H1 (cell line): ENCODE measurements at regions of chr3 and their contacts with region 1.

Region 1: DNA sequence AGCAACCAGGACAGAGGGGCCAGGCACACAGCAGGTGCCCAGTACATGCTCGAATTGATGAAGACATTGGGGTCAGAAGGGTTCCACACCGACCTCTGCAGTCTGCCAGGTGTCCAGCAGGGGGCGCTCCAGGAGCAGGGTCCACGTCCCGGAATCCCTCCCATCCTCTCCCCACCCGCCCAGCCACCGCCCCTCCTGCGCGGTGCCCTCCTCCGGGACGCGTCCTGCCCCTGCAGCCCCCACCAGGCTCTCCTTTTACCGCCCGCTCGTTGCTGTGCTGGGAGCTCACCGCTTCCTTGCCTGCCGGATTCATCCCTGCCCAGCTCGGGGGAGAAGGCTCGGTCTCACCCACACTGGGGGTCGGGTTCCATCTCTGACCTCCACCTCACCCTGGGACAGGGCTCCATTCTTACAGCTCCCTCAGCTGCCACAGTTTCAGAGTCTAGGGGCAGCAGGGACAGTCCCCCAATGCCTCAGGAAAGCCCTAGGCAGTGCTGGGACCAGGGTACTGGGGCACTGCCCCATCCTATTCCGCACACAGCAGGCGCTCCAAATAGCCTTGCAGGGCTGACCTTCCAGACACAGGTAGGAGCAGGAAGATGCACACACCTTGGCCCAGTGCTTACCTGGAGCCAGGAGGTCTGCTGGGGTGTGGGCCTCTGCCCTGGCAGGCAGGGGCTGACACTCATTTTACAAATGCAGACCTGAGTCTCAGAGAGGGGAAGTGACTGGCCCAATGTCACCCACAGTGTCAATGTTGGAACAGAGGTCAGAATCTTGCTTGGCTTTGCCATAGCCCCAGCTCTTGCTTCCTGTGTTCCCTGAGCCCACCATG is 31.0 kb downstream of the GRIP2 start:
- DNase-seq: peak; percentile 78 to 100
- H3K4me3 ChIP-seq: peak overlapping the region in 3 of 4 experiments; percentile 33 to 55 (median 47); a peak in 6 of 8 replicates
- H3K27ac ChIP-seq: no peak overlapping the region
- H3K4me1 ChIP-seq: peaks cover 0 to 8% (median 5%) of the 10 kb centered on the region in 4 experiments; a peak in 4 of 7 replicates
- H3K27me3 ChIP-seq: no peaks in the 10 kb centered on the region
- CTCF ChIP-seq: peak in 2 of 3 experiments; percentile 86 to 91; a peak in 3 of 4 replicates
- EP300 ChIP-seq: no peak
- POLR2A ChIP-seq: no peak
- RAD21 ChIP-seq: peak; percentile 91

Region 2: GRCh38 chr3:14497321-14497720 is 11.9 kb before region 1 on chr3:
- CTCF ChIA-PET with region 1: interaction called, 18 read pairs
- POLR2A ChIA-PET with region 1: interaction called, 3 read pairs
- DNase-seq: no peak
- H3K4me3 ChIP-seq: no peak overlapping the region
- H3K27ac ChIP-seq: no peak overlapping the region
- H3K4me1 ChIP-seq: no peaks in the 10 kb centered on the region
- H3K27me3 ChIP-seq: no peaks in the 10 kb centered on the region
- CTCF ChIP-seq: peak; percentile 29 to 53 (median 43); a peak in 3 of 4 replicates
- EP300 ChIP-seq: no peak
- POLR2A ChIP-seq: no peak
- RAD21 ChIP-seq: peak; percentile 63 to 73

Region 3: DNA sequence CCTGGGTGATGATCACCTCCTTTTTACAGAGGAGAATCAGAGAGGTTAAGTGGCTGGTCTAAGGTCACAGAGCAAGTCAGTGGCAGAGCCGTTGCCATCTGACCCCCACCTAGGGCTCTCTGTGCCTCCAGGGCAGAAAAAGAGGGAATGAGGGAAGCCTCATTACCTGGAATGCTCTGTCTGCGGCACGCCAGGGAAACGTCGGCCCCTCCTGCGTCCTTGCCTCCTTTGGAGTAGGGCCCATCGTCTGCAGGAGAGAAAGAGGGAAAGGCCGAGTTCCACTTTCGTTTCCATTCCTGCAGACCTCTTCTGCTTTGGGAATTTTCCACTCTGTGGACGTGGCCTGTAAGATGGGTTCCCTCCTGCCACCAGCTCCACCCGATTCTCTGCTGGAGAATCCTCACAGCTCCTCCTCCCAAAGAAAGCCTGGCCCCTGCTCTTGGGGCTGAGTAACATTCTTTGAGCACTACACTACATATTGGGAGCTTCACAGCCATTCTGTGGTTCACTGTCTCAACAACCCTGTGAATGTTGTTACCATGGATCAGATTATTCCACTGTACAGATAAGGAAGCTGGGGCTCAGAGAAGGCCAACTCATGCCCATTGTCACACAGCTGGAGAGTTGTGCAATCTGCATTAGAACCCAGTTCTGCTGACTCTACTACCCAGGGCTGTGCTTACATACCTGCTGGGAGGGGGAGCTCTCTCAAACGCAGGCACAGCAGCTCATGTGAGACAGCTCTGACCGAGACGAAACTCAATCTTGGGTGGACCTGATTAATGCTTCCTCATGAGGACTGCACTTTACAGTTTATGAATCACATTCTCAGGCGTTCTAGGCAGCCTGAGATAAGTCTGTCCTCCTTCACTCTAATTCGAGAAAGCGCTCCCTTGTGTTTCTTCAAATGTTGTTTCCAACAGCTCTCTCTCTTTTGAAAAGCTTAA is 16.8 kb after region 1 on chr3:
- CTCF ChIA-PET with region 1: interaction called, 103 read pairs
- POLR2A ChIA-PET with region 1: interaction called, 4 read pairs
- DNase-seq: no peak
- H3K4me3 ChIP-seq: no peak overlapping the region
- H3K27ac ChIP-seq: no peak overlapping the region
- H3K4me1 ChIP-seq: peaks cover 2 to 9% (median 7%) of the 10 kb centered on the region in 4 experiments
- H3K27me3 ChIP-seq: no peaks in the 10 kb centered on the region
- CTCF ChIP-seq: no peak
- EP300 ChIP-seq: no peak
- POLR2A ChIP-seq: no peak
- RAD21 ChIP-seq: no peak

Region 4: DNA sequence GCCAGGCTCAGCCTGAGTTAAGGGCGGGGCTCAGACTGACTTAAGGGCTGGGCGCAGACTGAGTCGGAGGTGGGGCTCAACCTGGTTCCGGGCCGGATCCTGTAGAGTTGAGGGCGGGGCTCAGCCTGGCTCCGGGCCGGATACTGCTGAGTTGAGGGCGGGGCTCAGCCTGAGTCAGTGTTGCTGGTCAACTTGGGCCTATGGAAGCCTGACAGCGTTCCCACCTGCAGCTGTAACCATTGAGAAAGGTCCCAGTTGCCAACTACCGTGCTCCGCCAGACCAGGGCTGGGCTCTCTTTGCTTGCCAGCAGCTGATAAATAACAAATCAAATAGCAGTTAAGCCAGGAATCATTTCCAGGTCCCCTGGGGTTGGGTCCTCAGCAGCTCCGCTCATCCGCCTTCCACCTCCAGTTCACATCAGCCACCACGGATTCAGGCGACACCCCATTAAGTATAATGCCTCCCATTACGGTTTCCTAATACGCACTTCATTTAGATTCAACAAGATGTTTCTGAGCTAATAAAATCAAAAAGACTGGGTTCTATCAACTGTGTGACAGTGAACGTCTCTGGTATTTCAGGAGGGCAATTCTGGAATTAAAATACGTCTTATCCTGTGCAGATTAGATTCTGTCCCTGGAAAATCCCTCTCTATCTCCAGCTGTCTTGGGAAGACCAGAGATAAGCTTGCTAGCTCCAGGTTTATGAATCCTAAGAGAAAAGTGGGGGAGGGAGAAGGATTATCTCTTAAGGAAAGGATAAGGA is 23.7 kb after region 1 on chr3:
- CTCF ChIA-PET with region 1: interaction called, 27 read pairs
- POLR2A ChIA-PET with region 1: interaction called, 3 read pairs
- DNase-seq: peak; percentile 77 to 88
- H3K4me3 ChIP-seq: peak overlapping the region in 1 of 4 experiments; percentile 16; a peak in 1 of 8 replicates
- H3K27ac ChIP-seq: no peak overlapping the region
- H3K4me1 ChIP-seq: peaks cover 8 to 39% (median 30%) of the 10 kb centered on the region in 4 experiments
- H3K27me3 ChIP-seq: no peaks in the 10 kb centered on the region
- CTCF ChIP-seq: no peak
- EP300 ChIP-seq: no peak
- POLR2A ChIP-seq: no peak
- RAD21 ChIP-seq: no peak

Region 5: GRCh38 chr3:14602006-14602803 is 93.0 kb after region 1 on chr3:
- CTCF ChIA-PET with region 1: interaction called, 26 read pairs
- POLR2A ChIA-PET with region 1: interaction called, 4 read pairs
- DNase-seq: peak in 1 of 2 experiments; percentile 67
- H3K4me3 ChIP-seq: peak overlapping the region; percentile 45 to 73 (median 52)
- H3K27ac ChIP-seq: no peak overlapping the region
- H3K4me1 ChIP-seq: peaks cover 0 to 12% (median 9%) of the 10 kb centered on the region in 4 experiments; a peak in 6 of 7 replicates
- H3K27me3 ChIP-seq: peaks cover 0 to 14% (median 10%) of the 10 kb centered on the region in 4 experiments; a peak in 5 of 7 replicates
- CTCF ChIP-seq: peak; percentile 38 to 43 (median 41)
- EP300 ChIP-seq: no peak
- POLR2A ChIP-seq: no peak
- RAD21 ChIP-seq: peak in 1 of 2 experiments; percentile 21; a peak in 1 of 4 replicates

Region 6: DNA sequence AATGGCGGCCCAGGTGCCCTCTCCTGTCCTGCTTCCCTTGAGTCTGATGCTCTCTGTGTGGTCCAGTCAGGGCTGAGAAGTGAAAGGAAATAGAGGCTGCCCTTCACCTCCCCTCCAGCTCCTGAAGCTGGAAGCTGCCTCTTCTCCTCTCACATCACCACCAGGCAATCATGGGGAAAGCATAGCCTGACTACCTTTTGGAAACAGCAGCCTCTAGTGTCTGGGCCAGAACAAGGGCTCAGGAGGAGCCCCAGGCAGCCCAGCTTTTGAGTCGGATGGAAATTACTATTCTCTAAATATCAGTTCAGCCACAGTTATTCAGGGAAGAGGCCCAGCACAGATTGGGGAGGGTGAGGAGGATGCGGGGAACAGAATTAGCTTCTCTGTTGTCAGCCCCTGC is 99.1 kb after region 1 on chr3:
- CTCF ChIA-PET with region 1: interaction called, 26 read pairs
- POLR2A ChIA-PET with region 1: interaction called, 4 read pairs
- DNase-seq: no peak
- H3K4me3 ChIP-seq: no peak overlapping the region
- H3K27ac ChIP-seq: no peak overlapping the region
- H3K4me1 ChIP-seq: peaks cover 0 to 4% (median 1%) of the 10 kb centered on the region in 4 experiments; a peak in 4 of 7 replicates
- H3K27me3 ChIP-seq: peaks cover 0 to 9% (median 5%) of the 10 kb centered on the region in 4 experiments; a peak in 4 of 7 replicates
- CTCF ChIP-seq: peak; percentile 35 to 59 (median 56)
- EP300 ChIP-seq: no peak
- POLR2A ChIP-seq: no peak
- RAD21 ChIP-seq: peak; percentile 53 to 64

Region 7: GRCh38 chr3:14633819-14634424 is 124.7 kb after region 1 on chr3:
- CTCF ChIA-PET with region 1: interaction called, 14 read pairs
- POLR2A ChIA-PET with region 1: no interaction called
- DNase-seq: peak in 1 of 2 experiments; percentile 57
- H3K4me3 ChIP-seq: no peak overlapping the region
- H3K27ac ChIP-seq: no peak overlapping the region
- H3K4me1 ChIP-seq: no peaks in the 10 kb centered on the region
- H3K27me3 ChIP-seq: no peaks in the 10 kb centered on the region; a peak in 1 of 7 replicates
- CTCF ChIP-seq: peak; percentile 84 to 99 (median 95)
- EP300 ChIP-seq: no peak
- POLR2A ChIP-seq: no peak
- RAD21 ChIP-seq: peak; percentile 54 to 67